ENCODE measurements at regions of chr5 and their contacts with region 1.

Region 1: GRCh38 chr5:36744773-36745589 is 131.6 kb upstream of the NIPBL start:
- DNase-seq: peak; percentile 75
- CTCF ChIP-seq: peak; percentile 72

Region 2: GRCh38 chr5:36870399-36871040 is 125.5 kb after region 1 on chr5:
- CTCF ChIA-PET with region 1: interaction called, 68 read pairs
- POLR2A ChIA-PET with region 1: no interaction called
- DNase-seq: peak; percentile 64
- CTCF ChIP-seq: peak; percentile 62

Measured in GM10248 (cell line).